ENCODE measurements at regions of chr12 and their contacts with region 1.

Region 1: GRCh38 chr12:12716793-12717585 is at the start of gene CDKN1B:
- DNase-seq: peak; percentile 93
- H3K4me3 ChIP-seq: peak within 1 kb of the TSS; percentile 76
- H3K27ac ChIP-seq: peak within 1 kb of the TSS; percentile 97
- H3K4me1 ChIP-seq: peaks cover 85% of the 10 kb centered on the region
- H3K27me3 ChIP-seq: no peaks in the 10 kb centered on the region
- CTCF ChIP-seq: no peak
- total RNA-seq, gene CDKN1B: 36.3 TPM

Region 2: DNA sequence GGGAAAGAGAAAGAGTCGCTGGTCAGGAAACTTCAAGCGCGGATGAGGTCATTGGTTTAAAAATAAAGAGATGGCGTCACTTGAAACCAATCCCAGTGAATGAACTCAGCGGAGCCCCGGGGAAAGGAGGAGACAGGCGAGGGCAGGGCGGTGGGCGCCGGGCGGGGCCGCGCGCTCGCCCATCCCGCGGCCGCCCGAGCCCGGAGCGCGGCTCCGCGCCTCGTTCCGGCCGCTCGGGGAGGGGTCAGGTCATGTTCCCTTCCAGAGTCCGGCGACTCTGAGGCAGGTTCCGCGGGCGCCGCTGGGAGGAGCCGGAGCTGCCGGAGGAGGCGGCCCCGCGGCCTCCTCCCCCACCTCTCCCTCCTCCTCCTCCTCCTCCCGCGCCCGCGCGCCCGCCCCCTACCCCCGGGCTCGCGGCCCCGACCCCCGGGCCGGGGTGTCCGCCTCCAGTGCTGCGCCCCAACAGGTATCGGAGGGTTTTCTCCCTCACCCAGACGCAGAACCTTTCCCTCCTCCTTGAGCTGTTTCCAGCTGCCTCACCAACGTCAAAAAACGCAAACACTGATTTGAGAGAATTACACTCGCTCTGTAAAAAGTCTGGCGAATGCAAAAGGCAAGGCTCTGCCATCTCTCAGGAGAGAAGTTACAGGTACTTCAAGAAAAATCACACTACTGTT is 154.3 kb before region 1 on chr12 and contains the start of gene DUSP16:
- intact Hi-C with region 1: loop called (anchors 10 kb)
- DNase-seq: peak; percentile 92
- H3K4me3 ChIP-seq: peak within 1 kb of the TSS; percentile 70
- H3K27ac ChIP-seq: peak within 1 kb of the TSS; percentile 100
- H3K4me1 ChIP-seq: peaks cover 34% of the 10 kb centered on the region
- H3K27me3 ChIP-seq: no peaks in the 10 kb centered on the region
- CTCF ChIP-seq: peak; percentile 46
- total RNA-seq, gene DUSP16: 16.4 TPM